Cardiac septum (tissue), 1 donor: ENCODE measurements at regions of chr17 and their contacts with region 1.

Region 1: DNA sequence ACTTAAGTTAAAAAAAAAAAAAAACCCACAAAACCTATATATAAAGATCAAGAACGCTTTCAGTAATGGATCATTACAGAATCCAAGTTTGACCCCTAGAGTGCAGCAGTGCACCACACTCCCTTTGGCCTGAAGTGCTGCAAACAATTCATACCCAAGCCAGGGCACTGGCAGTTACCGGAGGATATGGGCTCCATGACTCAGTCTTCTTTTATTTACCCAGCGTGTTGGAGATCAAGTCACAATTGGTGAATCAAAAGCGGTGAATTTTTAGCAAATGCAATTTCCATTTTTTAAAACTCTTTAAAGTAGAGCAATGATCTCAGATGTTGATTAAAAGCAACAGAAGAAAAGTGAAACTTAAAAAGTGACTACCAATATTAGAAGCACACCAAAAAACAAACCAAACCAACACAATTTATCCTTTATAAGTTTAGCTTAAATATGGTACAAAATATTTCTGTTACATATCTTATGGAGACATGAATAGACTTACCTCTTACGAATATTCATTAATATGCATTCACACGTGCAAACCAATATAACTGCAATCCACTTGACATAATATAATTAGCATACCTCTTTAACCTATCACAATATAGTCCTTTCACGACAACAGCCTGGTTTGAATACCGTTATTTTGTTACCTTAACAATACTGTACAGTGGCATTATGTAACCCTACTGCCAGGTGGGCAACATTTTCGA is 46.3 kb downstream of the ZNF652 start:
- DNase-seq: peak; percentile 78

Region 2: DNA sequence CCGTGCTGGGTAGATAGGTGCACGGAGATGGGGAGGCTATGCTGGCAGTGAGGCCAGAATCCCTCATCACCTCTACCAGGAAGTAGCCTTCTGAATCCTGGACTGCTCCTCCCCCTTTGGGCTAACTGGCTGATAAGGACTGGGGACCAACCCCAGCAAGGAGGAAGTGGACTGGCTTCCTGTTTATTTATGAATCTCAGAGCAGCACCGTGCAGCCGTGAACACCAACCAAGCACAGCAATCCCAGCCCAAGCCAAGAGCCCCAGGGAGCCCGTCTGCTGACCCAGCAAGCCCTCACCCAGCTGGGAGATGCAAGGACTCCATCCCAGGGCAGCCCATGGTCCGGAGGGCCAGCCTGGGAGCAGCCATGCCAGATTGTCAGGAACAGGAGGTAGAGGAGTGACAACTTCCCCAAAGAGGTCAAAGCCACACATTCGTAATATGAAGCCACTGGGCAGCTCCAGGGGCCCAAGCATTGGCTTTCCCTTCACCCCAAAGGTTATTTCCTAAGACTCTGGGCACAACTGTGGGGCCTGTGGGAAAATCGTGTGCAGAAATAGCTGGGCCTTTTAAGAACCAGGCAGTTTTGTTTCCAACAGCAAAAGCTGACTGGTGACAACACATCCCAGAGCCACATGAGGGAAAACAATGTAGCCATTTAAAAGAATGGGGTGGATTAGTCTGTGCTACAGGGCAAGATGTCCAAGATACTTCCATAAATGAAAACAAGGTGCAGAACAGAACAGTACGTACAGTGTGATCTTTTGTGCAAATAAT is 75.0 kb after region 1 on chr17:
- intact Hi-C with region 1: loop called (anchors 1 kb)
- DNase-seq: peak; percentile 77